Activated CD8-positive, alpha-beta T cell treated with anti-CD3 and anti-CD28 coated beads for 36 hours (primary cell): ENCODE measurements at regions of chr22 and their contacts with region 1.

Region 1: DNA sequence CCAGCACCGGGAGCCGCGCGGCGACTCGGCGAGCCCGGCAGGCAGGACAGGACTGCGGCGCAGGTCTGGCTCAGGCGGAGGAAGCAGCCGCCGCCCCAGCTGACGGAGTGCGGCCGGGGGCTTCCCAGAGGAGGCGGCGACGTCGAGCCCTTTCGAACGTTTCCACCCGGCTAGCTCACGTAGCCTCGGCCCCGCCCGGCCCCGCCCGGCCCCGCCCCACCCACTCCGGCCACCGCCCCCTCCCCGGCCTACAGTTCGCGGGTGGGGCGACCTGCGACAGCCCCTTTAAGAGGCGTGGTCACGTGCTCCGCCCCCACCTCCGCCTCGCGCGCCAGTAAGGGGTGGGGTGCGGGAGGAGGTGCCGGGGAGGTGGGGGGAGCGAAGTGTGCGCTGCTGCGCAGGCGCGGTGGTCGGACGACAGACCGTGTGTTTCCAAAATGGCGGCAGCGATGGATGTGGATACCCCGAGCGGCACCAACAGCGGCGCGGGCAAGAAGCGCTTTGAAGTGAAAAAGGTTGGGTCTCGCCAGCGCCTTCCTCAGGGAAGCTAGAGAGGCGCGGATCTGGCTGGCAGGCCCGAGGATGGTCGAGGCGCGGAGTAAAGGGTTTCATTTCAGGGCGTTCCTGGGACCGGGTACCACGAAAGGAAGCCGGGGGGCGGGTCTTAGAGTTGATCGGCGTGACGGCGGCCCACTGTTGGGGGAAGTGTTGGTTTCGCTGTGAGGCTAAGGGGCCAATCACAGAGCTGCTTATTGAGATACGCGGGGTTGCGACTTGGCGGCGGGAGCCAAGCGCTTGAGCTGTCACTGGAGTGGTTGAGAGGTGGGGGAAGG is at the start of gene RBX1:
- DNase-seq: peak; percentile 99
- ATAC-seq: peak; percentile 87
- H3K4me3 Mint-ChIP-seq: peak within 1 kb of the TSS; percentile 98
- H3K27ac Mint-ChIP-seq: peak within 1 kb of the TSS; percentile 100
- H3K4me1 Mint-ChIP-seq: peaks cover 22% of the 10 kb centered on the region
- H3K27me3 Mint-ChIP-seq: no peaks in the 10 kb centered on the region
- CTCF ChIP-seq: no peak
- total RNA-seq, gene RBX1: 90.4 to 92.8 TPM

Region 2: GRCh38 chr22:40714192-40714951 is 236.8 kb before region 1 on chr22:
- CTCF ChIA-PET with region 1: no interaction called
- POLR2A ChIA-PET with region 1: no interaction called
- intact Hi-C with region 1: no loop called
- DNase-seq: no peak
- ATAC-seq: no peak
- H3K4me3 Mint-ChIP-seq: no peak overlapping the region
- H3K27ac Mint-ChIP-seq: no peak overlapping the region
- H3K4me1 Mint-ChIP-seq: peaks cover 16% of the 10 kb centered on the region
- H3K27me3 Mint-ChIP-seq: no peaks in the 10 kb centered on the region
- CTCF ChIP-seq: no peak

Region 3: GRCh38 chr22:40877488-40877887 is 73.7 kb before region 1 on chr22:
- CTCF ChIA-PET with region 1: no interaction called
- POLR2A ChIA-PET with region 1: no interaction called
- intact Hi-C with region 1: no loop called
- DNase-seq: no peak
- ATAC-seq: no peak
- H3K4me3 Mint-ChIP-seq: no peak overlapping the region
- H3K27ac Mint-ChIP-seq: no peak overlapping the region
- H3K4me1 Mint-ChIP-seq: no peaks in the 10 kb centered on the region
- H3K27me3 Mint-ChIP-seq: no peaks in the 10 kb centered on the region
- CTCF ChIP-seq: no peak

Region 4: GRCh38 chr22:40979871-40980270 is 28.7 kb after region 1 on chr22:
- CTCF ChIA-PET with region 1: no interaction called
- POLR2A ChIA-PET with region 1: no interaction called
- intact Hi-C with region 1: no loop called
- DNase-seq: no peak
- ATAC-seq: no peak
- H3K4me3 Mint-ChIP-seq: no peak overlapping the region
- H3K27ac Mint-ChIP-seq: no peak overlapping the region
- H3K4me1 Mint-ChIP-seq: no peaks in the 10 kb centered on the region
- H3K27me3 Mint-ChIP-seq: no peaks in the 10 kb centered on the region
- CTCF ChIP-seq: no peak

Region 5: GRCh38 chr22:40990430-40990829 is 39.3 kb after region 1 on chr22:
- CTCF ChIA-PET with region 1: no interaction called
- POLR2A ChIA-PET with region 1: no interaction called
- intact Hi-C with region 1: no loop called
- DNase-seq: no peak
- ATAC-seq: no peak
- H3K4me3 Mint-ChIP-seq: no peak overlapping the region
- H3K27ac Mint-ChIP-seq: no peak overlapping the region
- H3K4me1 Mint-ChIP-seq: no peaks in the 10 kb centered on the region
- H3K27me3 Mint-ChIP-seq: peaks cover 1% of the 10 kb centered on the region
- CTCF ChIP-seq: no peak

Region 6: DNA sequence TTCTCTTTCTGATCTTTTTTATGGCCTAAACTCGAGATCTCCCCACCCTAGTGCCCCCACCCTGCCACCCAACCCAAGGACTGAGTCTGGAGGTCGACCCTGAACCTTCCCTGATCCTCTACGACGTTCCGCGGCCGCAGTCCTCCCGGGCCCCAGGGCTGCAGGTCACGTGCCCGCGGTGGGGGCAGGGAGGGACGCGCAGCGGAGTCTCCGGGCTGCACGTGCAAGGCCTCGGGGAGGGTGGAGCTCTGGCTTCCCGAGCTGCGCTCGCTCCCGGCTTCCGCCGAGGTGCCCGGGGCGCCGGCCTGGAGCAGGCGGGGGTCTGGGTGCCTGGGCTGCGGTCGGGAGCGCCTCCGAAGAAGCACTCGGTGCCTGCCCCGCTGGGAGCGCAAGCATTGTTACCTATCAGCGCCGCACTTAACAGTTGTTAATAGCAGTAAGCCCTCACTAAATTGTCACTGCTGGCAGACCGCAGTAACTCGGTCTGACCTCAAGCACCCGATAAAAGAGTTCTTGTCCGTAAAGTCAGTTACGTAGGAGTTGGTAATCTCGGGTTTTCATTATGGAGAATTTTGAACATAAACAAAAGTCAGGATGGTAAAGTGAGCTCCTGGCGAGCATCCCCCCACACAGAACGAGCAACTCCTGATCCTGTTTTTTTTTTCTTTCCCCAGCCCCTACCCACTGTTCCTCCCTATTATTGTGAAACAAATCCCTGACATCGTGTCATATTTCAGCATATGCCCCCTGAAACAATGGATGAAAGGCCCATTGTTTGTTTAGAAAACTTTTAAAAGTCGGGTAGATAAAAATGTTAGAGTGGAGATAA is 71.5 kb after region 1 on chr22:
- CTCF ChIA-PET with region 1: no interaction called
- POLR2A ChIA-PET with region 1: interaction called, 14 read pairs
- intact Hi-C with region 1: no loop called
- DNase-seq: peak; percentile 80
- ATAC-seq: peak; percentile 68
- H3K4me3 Mint-ChIP-seq: peak overlapping the region; percentile 84
- H3K27ac Mint-ChIP-seq: peak overlapping the region; percentile 77
- H3K4me1 Mint-ChIP-seq: peaks cover 9% of the 10 kb centered on the region
- H3K27me3 Mint-ChIP-seq: no peaks in the 10 kb centered on the region
- CTCF ChIP-seq: no peak

Region 7: DNA sequence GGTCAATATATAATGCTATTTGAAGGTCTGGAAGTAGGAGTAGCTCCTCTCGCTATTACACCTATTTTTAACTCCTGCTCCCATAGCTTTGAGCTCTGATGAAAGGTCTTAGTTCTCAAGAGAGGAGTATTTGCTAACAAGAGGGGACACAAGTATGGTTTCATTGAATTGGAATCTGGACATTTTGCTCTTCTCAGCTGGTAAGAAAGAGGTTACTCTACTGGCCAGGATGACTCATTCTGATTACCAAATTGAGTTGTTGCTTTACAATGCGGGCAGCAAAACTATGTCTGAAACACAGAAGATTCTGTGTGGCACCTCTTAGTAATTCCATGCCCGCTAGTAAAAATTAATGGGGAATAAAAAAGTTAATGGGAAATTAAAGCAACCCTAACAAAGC is 77.7 kb after region 1 on chr22:
- CTCF ChIA-PET with region 1: no interaction called
- POLR2A ChIA-PET with region 1: interaction called, 14 read pairs
- intact Hi-C with region 1: no loop called
- DNase-seq: no peak
- ATAC-seq: no peak
- H3K4me3 Mint-ChIP-seq: no peak overlapping the region
- H3K27ac Mint-ChIP-seq: no peak overlapping the region
- H3K4me1 Mint-ChIP-seq: no peaks in the 10 kb centered on the region
- H3K27me3 Mint-ChIP-seq: no peaks in the 10 kb centered on the region
- CTCF ChIP-seq: no peak